PC-3 (cell line): ENCODE measurements at regions of chr4 and their contacts with region 1.

Region 1: GRCh38 chr4:123340381-123340701 is 56.3 kb upstream of the SPRY1 start:
- DNase-seq: peak; percentile 91
- ATAC-seq: peak; percentile 95
- H3K4me3 ChIP-seq: no peak overlapping the region
- H3K27ac ChIP-seq: peak overlapping the region; percentile 89
- H3K4me1 ChIP-seq: peaks cover 18% of the 10 kb centered on the region
- H3K27me3 ChIP-seq: no peaks in the 10 kb centered on the region
- CTCF ChIP-seq: no peak

Region 2: GRCh38 chr4:123390846-123391456 is 50.6 kb after region 1 on chr4:
- CTCF ChIA-PET with region 1: no interaction called
- POLR2A ChIA-PET with region 1: no interaction called
- intact Hi-C with region 1: loop called (anchors 5 kb)
- DNase-seq: peak; percentile 47
- ATAC-seq: peak; percentile 35; the same call in 1 of the 2 replicates
- H3K4me3 ChIP-seq: no peak overlapping the region
- H3K27ac ChIP-seq: no peak overlapping the region
- H3K4me1 ChIP-seq: peaks cover 6% of the 10 kb centered on the region
- H3K27me3 ChIP-seq: no peaks in the 10 kb centered on the region
- CTCF ChIP-seq: peak; percentile 63